Heart right ventricle (tissue), 16 donors: ENCODE measurements at regions of chr16 and their contacts with region 1.

Region 1: GRCh38 chr16:57899771-57900661 is 70.9 kb downstream of the CNGB1 start:
- DNase-seq: peak; percentile 64 to 78
- ATAC-seq: peak; percentile 61 to 87 (median 76)
- H3K4me3 ChIP-seq: no peak overlapping the region
- H3K27ac ChIP-seq: no peak overlapping the region
- H3K4me1 ChIP-seq: peaks cover 0 to 12% (median 0%) of the 10 kb centered on the region in 9 donors
- H3K27me3 ChIP-seq: peaks cover 0 to 44% (median 22%) of the 10 kb centered on the region in 7 donors
- CTCF ChIP-seq: peak; percentile 61 to 95 (median 93)

Region 2: DNA sequence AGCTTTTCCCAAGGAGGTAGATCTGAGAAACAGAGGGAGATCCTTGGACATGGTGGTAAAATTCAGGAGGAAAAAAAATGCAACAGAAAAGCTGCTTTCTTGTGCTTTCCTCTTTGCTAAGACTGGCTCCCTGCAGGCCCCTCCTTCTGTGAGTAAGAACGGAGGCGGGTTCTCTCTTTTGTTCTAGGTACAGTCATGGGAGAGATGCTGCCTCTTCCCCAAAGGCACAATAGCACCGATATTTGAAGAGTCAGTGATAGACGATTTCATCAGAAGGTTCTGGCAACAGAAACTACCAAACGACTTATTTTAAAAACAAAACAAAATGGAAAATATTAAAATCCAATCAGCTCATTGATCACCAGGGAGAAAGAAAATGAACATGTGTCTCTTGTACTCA is 65.1 kb before region 1 on chr16:
- intact Hi-C with region 1: no loop called
- DNase-seq: no peak
- ATAC-seq: no peak
- H3K4me3 ChIP-seq: no peak overlapping the region
- H3K27ac ChIP-seq: no peak overlapping the region
- H3K4me1 ChIP-seq: peaks cover 0 to 6% (median 3%) of the 10 kb centered on the region in 9 donors
- H3K27me3 ChIP-seq: no peaks in the 10 kb centered on the region
- CTCF ChIP-seq: no peak

Region 3: GRCh38 chr16:58129097-58129936 is 229.3 kb after region 1 on chr16 and contains the start of gene CFAP20:
- intact Hi-C with region 1: loop called in 7 of 10 experiments (anchors 5 to 10 kb)
- DNase-seq: peak; percentile 98 to 99
- ATAC-seq: peak; percentile 97 to 98 (median 97)
- H3K4me3 ChIP-seq: peak within 1 kb of the TSS; percentile 71 to 95 (median 92)
- H3K27ac ChIP-seq: peak within 1 kb of the TSS; percentile 52 to 95 (median 90)
- H3K4me1 ChIP-seq: peaks cover 14 to 48% (median 43%) of the 10 kb centered on the region in 9 donors
- H3K27me3 ChIP-seq: no peaks in the 10 kb centered on the region
- CTCF ChIP-seq: peak in 1 of 9 donors; percentile 6
- total RNA-seq, gene CFAP20: 27.8 to 41.8 (median 34.7) TPM